AG04450 (cell line): ENCODE measurements at regions of chr6 and their contacts with region 1.

Region 1: DNA sequence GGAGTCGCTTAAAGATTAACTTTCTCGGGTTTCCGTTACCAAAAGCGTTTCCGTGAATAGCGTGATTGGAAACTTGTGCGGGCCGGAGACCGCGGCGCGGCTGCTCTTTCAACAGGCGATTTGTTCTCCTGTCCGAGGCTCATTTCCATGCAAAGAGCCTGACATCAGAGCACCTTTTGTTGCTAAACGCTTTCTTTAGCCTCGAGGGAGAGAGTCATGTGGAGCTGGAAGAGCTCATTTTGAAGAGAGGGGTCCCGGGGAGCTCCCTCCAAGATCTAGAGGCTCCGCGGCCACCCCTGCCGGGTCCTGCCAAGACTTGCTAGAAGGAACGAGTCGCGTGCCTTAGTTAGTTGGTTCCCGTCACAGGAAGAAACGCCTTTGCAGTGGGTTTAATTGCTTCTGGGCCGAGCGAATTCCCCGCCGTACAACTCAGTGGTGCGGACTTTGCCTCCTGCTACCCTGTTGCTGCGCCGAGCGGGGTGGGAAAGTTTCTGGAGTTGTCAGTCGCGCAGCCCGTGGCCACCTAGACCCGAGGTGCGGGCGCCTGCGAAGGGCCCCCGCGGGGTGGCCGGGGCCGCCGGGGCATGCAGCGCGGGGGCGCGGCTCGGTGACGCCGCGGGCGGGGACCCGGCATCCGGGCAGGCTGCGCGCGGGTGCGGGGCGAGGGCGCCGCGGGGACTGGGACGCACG is at the start of gene SASH1:
- DNase-seq: peak; percentile 38
- H3K4me3 ChIP-seq: peak within 1 kb of the TSS; percentile 83
- H3K27ac ChIP-seq: peak within 1 kb of the TSS; percentile 92
- H3K27me3 ChIP-seq: no peaks in the 10 kb centered on the region
- CTCF ChIP-seq: no peak
- polyA plus RNA-seq, gene SASH1: 26.6 and 27.0 TPM in 2 replicates

Region 2: DNA sequence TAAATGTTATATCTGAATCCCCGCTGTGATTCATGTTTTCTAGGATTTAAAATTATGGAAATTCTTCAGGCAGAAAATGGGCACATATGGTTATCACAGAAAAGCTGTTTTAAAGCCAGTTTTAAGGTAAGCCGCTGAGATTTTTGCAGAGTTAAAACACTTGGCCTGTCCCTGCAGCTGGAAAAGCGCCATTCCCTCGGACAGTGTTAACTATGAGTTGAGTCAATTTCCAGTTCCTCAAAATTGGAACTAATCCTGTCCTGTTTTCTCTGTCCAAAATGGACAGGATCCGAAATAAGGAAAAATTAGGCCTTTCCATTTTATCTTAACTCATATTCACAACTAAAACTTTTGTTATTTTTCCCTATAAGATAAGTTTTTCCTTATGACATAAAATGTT is 608.8 kb before region 1 on chr6:
- CTCF ChIA-PET with region 1: interaction called, 11 read pairs
- POLR2A ChIA-PET with region 1: no interaction called
- DNase-seq: no peak
- H3K4me3 ChIP-seq: no peak overlapping the region
- H3K27ac ChIP-seq: no peak overlapping the region
- H3K27me3 ChIP-seq: no peaks in the 10 kb centered on the region
- CTCF ChIP-seq: no peak

Region 3: DNA sequence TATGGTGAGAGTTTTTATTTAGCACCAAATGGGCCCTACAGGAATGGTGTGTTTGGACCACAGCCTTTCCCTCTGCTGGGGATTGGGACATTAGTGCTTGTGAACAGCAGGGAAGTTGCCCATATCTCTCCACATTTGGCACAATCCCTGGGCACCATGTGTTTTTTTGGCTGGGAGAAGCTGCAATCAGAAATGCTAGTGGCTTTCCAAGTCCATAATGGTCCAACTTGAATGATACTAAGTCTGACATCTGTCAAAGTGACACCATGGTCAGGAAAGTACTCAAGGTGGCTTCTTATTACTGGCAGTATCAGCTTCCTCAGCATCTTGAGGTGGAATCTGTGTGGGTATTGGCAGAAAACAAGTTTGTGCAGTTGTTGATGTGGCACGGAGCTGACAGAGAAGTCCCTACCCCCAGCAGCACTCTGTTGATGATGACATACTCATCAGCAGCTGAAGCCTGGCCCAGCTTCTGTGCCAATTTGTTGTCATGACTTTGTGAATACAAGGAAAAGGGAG is 53.1 kb after region 1 on chr6:
- CTCF ChIA-PET with region 1: no interaction called
- POLR2A ChIA-PET with region 1: no interaction called
- DNase-seq: no peak
- H3K4me3 ChIP-seq: no peak overlapping the region
- H3K27ac ChIP-seq: no peak overlapping the region
- H3K27me3 ChIP-seq: no peaks in the 10 kb centered on the region
- CTCF ChIP-seq: no peak